ENCODE measurements at regions of chr1 and their contacts with region 1.

Region 1: GRCh38 chr1:92817986-92818764 is 13.7 kb upstream of the RPL5 start:
- DNase-seq: peak; percentile 33
- ATAC-seq: no peak
- H3K4me3 Mint-ChIP-seq: no peak overlapping the region
- H3K27ac Mint-ChIP-seq: no peak overlapping the region
- H3K4me1 Mint-ChIP-seq: no peaks in the 10 kb centered on the region
- H3K27me3 Mint-ChIP-seq: peaks cover 9% of the 10 kb centered on the region

Region 2: DNA sequence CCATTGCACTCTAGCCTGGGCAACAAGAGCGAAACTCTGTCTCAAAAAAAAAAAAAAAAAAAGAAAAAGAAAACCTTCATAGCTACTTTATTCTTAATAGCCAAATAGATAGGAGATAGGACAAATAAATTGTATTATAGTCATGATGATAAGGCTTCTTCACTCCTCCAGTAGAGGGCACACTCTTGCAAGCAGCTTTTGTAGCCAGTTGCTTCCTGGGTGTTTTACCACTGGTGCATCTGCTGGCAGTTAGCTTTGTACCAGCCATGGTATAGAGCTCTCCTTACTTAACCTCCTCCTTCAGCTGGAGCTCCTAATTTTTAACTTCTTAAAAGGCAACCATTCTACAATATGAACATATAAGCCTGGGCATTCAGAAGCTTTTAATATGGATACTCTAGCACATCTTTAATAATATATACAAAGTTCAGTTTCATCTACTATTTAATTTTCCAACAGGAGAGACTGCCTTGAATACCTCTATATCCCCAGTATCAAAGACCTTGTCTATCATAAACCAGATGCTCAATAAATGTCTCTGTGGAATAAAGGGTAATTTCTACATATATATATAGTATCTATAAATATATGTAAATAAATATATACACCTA is 69.0 kb before region 1 on chr1:
- CTCF ChIA-PET with region 1: interaction called, 61 read pairs
- POLR2A ChIA-PET with region 1: interaction called, 3 read pairs
- intact Hi-C with region 1: loop called (anchors 1 kb)
- DNase-seq: peak; percentile 55
- ATAC-seq: peak; percentile 76
- H3K4me3 Mint-ChIP-seq: no peak overlapping the region
- H3K27ac Mint-ChIP-seq: no peak overlapping the region
- H3K4me1 Mint-ChIP-seq: no peaks in the 10 kb centered on the region
- H3K27me3 Mint-ChIP-seq: no peaks in the 10 kb centered on the region

Region 3: GRCh38 chr1:92754000-92754718 is 64.0 kb before region 1 on chr1:
- CTCF ChIA-PET with region 1: interaction called, 61 read pairs
- POLR2A ChIA-PET with region 1: interaction called, 3 read pairs
- intact Hi-C with region 1: loop called (anchors 1 kb)
- DNase-seq: no peak
- ATAC-seq: no peak
- H3K4me3 Mint-ChIP-seq: no peak overlapping the region
- H3K27ac Mint-ChIP-seq: no peak overlapping the region
- H3K4me1 Mint-ChIP-seq: no peaks in the 10 kb centered on the region
- H3K27me3 Mint-ChIP-seq: no peaks in the 10 kb centered on the region